Thyroid gland (tissue), 4 donors: ENCODE measurements at regions of chr19 and their contacts with region 1.

Region 1: GRCh38 chr19:36489118-36489919 is at the start of gene ZNF566:
- DNase-seq: peak; percentile 90
- H3K4me3 ChIP-seq: peak within 1 kb of the TSS; percentile 54 to 86 (median 83)
- H3K27ac ChIP-seq: peak within 1 kb of the TSS; percentile 76 to 97 (median 85)
- H3K4me1 ChIP-seq: peaks cover 0 to 6% of the 10 kb centered on the region in 2 donors
- H3K27me3 ChIP-seq: no peaks in the 10 kb centered on the region
- CTCF ChIP-seq: peak in 1 of 6 experiments; percentile 12
- POLR2A ChIP-seq: peak in 1 of 2 donors; percentile 69
- total RNA-seq, gene ZNF566: 17.7 to 22.2 (median 18.5) TPM

Region 2: DNA sequence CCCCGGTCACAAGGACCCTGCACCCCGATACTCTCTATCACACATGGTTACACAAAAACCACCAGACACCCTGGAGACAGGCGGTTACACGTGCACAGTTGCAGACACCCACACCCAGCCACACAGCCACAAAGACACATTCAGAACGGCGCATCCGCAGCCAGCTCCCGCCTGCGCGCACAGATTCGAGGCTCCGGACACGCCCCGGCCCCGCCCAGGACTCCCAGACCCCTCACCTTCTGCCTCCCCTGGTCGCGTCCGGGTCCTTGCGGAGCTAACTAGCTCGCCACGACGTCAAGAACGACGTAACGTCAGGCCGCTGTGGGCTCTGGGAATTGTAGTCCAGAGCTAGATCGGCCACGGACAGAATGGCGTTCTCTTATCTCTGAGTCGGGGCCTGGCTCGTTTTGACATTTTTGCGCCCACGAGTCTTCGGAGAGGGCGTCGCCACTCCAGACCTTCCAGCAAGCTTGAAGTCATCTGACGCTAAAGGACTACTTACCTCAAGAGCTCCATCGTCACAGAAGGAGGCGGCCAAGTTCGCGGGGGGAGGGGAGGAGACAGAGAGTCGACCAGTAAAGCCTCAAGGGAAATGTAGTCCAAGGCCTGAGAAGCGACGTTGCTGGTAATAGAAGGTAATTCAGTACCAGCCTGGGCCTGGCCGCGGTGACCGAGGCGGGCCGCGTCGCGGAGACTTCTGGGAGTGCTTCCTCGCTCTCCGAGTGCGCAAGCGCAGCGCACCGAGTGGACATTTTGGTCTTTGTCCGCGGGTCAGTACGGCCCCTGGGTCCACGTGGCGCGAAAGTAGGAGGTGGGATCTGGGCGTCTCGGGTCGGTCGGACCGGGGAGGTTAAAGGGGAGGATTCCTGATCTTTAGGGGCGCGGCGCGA is 274.7 kb before region 1 on chr19 and contains the starts of genes ZNF146 and ZNF565:
- intact Hi-C with region 1: loop called (anchors 10 kb)
- DNase-seq: peak; percentile 98
- H3K4me3 ChIP-seq: peak within 1 kb of the TSS; percentile 26 to 89 (median 56)
- H3K27ac ChIP-seq: peak within 1 kb of the TSS; percentile 76 to 95 (median 94)
- H3K4me1 ChIP-seq: peaks cover 10 to 12% of the 10 kb centered on the region in 2 donors
- H3K27me3 ChIP-seq: no peaks in the 10 kb centered on the region
- CTCF ChIP-seq: peak in 4 of 6 experiments; percentile 13 to 48 (median 34)
- POLR2A ChIP-seq: peak; percentile 54 to 83
- total RNA-seq, gene ZNF146: 69.6 to 127 (median 79.7) TPM
- total RNA-seq, gene ZNF565: 7.2 to 13.1 (median 7.4) TPM